Naive thymus-derived CD4-positive, alpha-beta T cell (primary cell): ENCODE measurements at regions of chr3 and their contacts with region 1.

Region 1: DNA sequence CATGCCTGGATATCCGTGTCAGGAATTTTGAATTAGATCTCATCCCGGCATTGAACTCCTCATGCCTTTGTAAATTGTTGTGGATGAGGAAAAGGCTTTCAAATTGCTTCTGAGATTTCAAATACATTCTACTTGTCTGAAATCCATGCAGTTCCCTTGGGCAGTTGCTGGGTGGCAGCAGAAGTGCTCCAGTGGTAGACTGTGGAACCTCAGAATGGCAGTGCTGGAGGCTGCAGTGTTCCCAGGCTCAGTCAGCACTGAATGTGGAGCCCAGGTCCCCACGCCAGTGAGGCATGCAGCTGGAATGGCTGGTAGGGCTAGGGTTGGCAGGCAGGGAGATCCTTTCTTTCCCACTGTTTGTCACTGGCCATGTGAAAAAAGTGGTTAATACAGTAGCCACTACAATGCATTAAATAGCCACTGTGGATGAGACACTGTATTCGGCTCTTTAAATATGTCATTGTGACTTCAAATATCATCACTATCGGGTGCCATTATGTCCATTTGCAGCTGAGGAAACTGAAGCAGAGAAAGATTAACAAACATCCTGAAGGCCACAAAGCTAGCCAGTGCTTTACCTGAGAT is 98.6 kb downstream of the TPRG1 start:
- DNase-seq: peak in 6 of 9 donors; percentile 18 to 47 (median 32)
- ATAC-seq: peak; percentile 53
- H3K4me3 ChIP-seq: no peak overlapping the region
- H3K4me3 Mint-ChIP-seq: no peak overlapping the region
- H3K27ac ChIP-seq: no peak overlapping the region
- H3K27ac Mint-ChIP-seq: peak overlapping the region in 1 of 9 donors; percentile 27
- H3K4me1 ChIP-seq: peaks cover 0 to 15% of the 10 kb centered on the region in 2 donors
- H3K4me1 Mint-ChIP-seq: peaks cover 5 to 34% (median 20%) of the 10 kb centered on the region in 7 donors
- H3K27me3 ChIP-seq: no peaks in the 10 kb centered on the region
- H3K27me3 Mint-ChIP-seq: no peaks in the 10 kb centered on the region

Region 2: DNA sequence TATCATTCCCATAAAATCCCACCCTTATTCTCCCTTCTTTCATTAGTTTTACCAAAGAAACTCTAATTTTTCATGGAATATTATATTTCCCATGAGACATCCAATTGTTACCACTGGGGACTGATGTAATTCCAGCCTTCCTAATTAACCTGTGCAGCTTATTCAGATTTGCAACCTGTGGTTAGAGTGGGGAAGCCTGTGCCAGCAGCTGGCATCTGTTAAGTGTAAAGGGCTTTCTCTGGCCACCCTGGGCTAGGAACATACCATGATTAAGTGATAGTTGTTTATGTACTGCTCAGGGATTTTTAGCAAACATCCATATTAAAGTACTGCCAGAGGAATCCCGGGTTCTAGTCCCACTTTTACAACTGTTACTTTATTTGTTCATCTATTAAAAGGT is 20.4 kb before region 1 on chr3:
- CTCF ChIA-PET with region 1: no interaction called
- POLR2A ChIA-PET with region 1: no interaction called
- intact Hi-C with region 1: no loop called
- DNase-seq: no peak
- ATAC-seq: no peak
- H3K4me3 ChIP-seq: no peak overlapping the region
- H3K4me3 Mint-ChIP-seq: no peak overlapping the region
- H3K27ac ChIP-seq: no peak overlapping the region
- H3K27ac Mint-ChIP-seq: peak overlapping the region in 1 of 9 donors; percentile 17
- H3K4me1 ChIP-seq: no peaks in the 10 kb centered on the region
- H3K4me1 Mint-ChIP-seq: peaks cover 0 to 1% (median 0%) of the 10 kb centered on the region in 7 donors
- H3K27me3 ChIP-seq: no peaks in the 10 kb centered on the region
- H3K27me3 Mint-ChIP-seq: peaks cover 0 to 18% (median 0%) of the 10 kb centered on the region in 5 donors

Region 3: DNA sequence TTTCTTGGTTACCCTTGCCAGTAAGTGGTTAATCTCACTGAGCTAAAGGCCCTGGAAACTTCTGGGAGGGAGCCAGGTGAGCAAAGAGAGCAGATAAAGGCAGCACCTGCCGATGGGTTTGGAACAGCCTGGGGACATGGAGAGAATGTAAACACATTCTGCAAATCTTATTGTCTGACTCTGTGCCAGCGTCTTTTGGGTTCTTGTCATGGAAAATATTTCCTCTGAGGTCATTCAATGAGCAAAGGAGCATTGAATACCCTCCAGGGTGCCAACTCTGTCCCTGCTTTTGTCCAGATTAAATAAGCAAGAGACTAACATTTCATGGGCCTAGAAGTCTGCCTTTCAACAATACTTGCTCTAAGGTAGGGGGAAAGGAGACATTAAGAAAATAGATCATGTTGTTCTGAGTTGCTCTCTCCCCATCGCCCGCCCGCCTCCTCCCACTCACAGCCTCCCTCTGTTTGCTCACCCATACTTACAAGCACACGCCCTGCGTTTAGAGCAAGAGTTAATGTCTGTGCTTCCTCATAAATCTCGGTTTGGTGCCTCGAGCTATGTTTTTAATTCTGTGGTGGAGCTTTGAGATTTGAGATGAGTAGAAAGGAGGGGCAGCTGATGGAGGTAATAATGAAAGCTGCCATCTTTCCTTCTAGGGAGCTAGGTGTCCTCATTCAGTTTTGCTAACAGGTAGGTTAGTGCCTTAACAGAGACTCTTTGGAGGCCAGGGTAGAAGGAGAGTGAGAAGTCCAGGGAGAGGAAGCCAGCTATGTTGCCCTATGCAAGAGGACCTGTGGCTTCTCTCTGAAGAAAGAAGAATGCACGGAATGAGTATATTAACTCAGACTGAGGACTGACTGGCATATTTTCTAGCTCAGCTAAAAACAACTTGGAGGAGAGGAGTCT is 34.4 kb after region 1 on chr3:
- CTCF ChIA-PET with region 1: interaction called, 7 read pairs
- POLR2A ChIA-PET with region 1: no interaction called
- intact Hi-C with region 1: loop called in 1 of 2 experiments (anchors 5 kb)
- DNase-seq: peak in 5 of 9 donors; percentile 16 to 42 (median 28)
- ATAC-seq: no peak
- H3K4me3 ChIP-seq: no peak overlapping the region
- H3K4me3 Mint-ChIP-seq: peak overlapping the region; percentile 27 to 77 (median 64)
- H3K27ac ChIP-seq: no peak overlapping the region
- H3K27ac Mint-ChIP-seq: peak overlapping the region; percentile 44 to 93 (median 86)
- H3K4me1 ChIP-seq: peaks cover 0 to 19% of the 10 kb centered on the region in 2 donors
- H3K4me1 Mint-ChIP-seq: peaks cover 15 to 68% (median 57%) of the 10 kb centered on the region in 7 donors
- H3K27me3 ChIP-seq: no peaks in the 10 kb centered on the region
- H3K27me3 Mint-ChIP-seq: no peaks in the 10 kb centered on the region

Region 4: DNA sequence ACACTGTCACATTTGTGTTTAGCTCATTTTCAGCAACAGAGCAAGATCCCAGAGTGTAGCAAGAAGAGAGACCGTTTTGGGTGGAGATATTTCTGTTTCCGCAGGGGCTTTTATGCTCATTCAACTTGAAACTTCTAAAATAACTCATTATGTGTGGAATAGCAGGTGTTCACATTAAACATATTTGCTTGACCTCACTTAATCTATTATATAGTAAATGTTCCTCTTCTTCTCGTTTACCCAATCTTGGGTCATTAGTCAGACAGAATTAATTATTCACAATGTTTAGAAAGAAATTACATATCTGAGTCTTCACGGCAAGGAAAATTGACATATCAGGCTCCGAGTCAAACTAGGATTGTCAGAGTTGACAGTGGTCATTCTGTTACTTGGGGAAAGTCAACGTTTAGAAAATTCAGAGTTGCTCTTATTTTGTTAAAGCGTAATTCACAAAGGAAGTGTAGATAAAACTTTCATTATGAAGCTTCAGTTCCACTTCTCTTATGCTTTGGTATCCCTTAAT is 124.3 kb after region 1 on chr3:
- CTCF ChIA-PET with region 1: interaction called, 3 read pairs
- POLR2A ChIA-PET with region 1: no interaction called
- intact Hi-C with region 1: loop called in 1 of 2 experiments (anchors 5 kb)
- DNase-seq: no peak
- ATAC-seq: no peak
- H3K4me3 ChIP-seq: no peak overlapping the region
- H3K4me3 Mint-ChIP-seq: peak overlapping the region in 1 of 10 donors; percentile 31
- H3K27ac ChIP-seq: no peak overlapping the region
- H3K27ac Mint-ChIP-seq: peak overlapping the region in 1 of 9 donors; percentile 62
- H3K4me1 ChIP-seq: no peaks in the 10 kb centered on the region
- H3K4me1 Mint-ChIP-seq: peaks cover 0 to 25% (median 0%) of the 10 kb centered on the region in 7 donors
- H3K27me3 ChIP-seq: no peaks in the 10 kb centered on the region
- H3K27me3 Mint-ChIP-seq: peaks cover 0 to 3% (median 0%) of the 10 kb centered on the region in 5 donors

Region 5: DNA sequence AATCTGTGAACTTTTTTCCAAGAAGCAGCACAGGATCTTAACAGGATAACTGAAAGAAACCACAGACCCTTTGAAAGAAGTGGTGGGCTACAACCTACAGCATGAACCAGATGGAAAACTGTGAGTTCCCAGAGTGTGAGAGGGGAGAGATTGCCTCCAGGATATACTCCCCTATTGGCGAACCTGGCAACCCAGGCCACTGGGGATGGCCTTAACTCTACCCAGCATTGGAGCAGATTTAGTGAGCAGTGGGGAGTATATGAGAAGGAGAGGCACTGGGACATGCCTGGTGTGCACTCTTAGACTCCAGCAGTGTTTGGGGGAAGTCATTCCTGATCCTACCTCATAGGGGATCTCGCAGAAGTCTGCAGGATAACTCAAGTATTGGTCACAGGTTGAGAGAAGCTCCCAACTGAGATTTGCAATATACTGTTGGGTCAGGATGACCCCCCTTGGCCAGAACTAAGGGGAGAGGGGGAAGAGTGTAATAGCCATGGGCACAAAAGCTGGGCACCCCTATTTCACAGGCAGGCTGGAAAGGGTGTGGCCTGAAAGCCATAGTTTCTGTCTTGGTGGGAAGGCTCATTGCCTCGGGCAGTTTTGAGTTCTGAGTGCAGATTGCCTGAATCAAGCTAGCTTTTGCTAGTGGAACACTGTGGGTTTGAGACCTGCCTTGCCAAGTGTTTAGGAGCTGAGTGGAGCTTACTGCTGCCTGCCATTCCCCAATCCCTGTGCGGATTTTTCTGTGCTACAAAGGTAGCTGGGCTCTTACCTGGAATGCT is 160.0 kb after region 1 on chr3:
- CTCF ChIA-PET with region 1: no interaction called
- POLR2A ChIA-PET with region 1: no interaction called
- intact Hi-C with region 1: no loop called
- DNase-seq: no peak
- ATAC-seq: no peak
- H3K4me3 ChIP-seq: no peak overlapping the region
- H3K4me3 Mint-ChIP-seq: no peak overlapping the region
- H3K27ac ChIP-seq: no peak overlapping the region
- H3K27ac Mint-ChIP-seq: no peak overlapping the region
- H3K4me1 ChIP-seq: no peaks in the 10 kb centered on the region
- H3K4me1 Mint-ChIP-seq: peaks cover 0 to 7% (median 1%) of the 10 kb centered on the region in 7 donors
- H3K27me3 ChIP-seq: no peaks in the 10 kb centered on the region
- H3K27me3 Mint-ChIP-seq: no peaks in the 10 kb centered on the region

Region 6: DNA sequence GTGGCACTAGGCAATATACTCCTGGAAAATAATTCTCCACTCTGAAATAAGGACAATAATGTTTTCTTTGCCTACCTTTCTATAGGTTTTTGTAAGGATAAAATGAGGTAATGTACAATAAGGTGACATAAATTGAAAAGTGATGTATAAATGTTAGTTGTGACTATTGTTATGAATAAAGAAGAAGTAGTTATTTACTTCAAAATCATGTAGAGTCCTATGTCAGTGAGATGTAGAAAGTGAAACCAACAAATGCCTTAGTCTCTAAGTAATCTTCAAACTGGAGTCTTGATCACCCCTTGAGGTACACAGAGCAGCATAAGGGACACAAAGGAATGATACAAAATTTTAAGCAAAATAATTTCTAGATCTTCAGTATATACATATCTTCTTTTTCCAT is 300.6 kb after region 1 on chr3:
- CTCF ChIA-PET with region 1: interaction called, 3 read pairs
- POLR2A ChIA-PET with region 1: no interaction called
- intact Hi-C with region 1: loop called in 1 of 2 experiments (anchors 5 kb)
- DNase-seq: peak in 1 of 9 donors; percentile 9
- ATAC-seq: no peak
- H3K4me3 ChIP-seq: no peak overlapping the region
- H3K4me3 Mint-ChIP-seq: peak overlapping the region in 8 of 10 donors; percentile 22 to 68 (median 57)
- H3K27ac ChIP-seq: no peak overlapping the region
- H3K27ac Mint-ChIP-seq: peak overlapping the region in 4 of 9 donors; percentile 19 to 59 (median 38)
- H3K4me1 ChIP-seq: no peaks in the 10 kb centered on the region
- H3K4me1 Mint-ChIP-seq: peaks cover 0 to 37% (median 13%) of the 10 kb centered on the region in 7 donors
- H3K27me3 ChIP-seq: no peaks in the 10 kb centered on the region
- H3K27me3 Mint-ChIP-seq: peaks cover 0 to 1% (median 0%) of the 10 kb centered on the region in 5 donors

Region 7: DNA sequence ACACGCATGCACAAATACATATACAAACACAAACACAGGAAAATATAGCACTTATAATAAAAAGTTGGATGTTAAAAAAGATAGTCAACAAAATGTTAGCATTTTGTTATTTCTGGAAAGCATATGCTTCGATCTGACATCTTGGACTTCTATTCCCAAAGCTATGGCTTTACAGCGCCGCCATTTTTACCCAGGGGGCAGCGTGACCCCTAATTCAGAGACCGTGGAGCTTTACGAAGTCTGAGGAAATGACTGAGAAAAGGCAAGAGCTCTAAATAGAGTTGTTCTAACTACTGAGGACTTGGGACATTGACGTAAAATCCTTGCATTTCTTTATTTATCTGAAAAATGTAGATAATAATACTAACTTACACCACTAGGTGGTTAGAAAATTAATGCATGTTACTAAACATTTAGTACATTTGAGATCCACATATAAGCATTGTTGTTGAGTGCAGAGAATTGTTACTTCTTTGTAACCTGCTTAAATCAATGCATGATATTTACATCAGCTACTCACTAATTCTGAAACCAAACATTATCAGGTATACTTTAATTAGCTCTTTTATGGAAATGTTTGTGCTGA is 516.2 kb after region 1 on chr3:
- CTCF ChIA-PET with region 1: no interaction called
- POLR2A ChIA-PET with region 1: no interaction called
- intact Hi-C with region 1: loop called in 1 of 2 experiments (anchors 5 kb)
- DNase-seq: no peak
- ATAC-seq: no peak
- H3K4me3 ChIP-seq: no peak overlapping the region
- H3K4me3 Mint-ChIP-seq: no peak overlapping the region
- H3K27ac ChIP-seq: no peak overlapping the region
- H3K27ac Mint-ChIP-seq: no peak overlapping the region
- H3K4me1 ChIP-seq: no peaks in the 10 kb centered on the region
- H3K4me1 Mint-ChIP-seq: peaks cover 4 to 15% (median 10%) of the 10 kb centered on the region in 7 donors
- H3K27me3 ChIP-seq: no peaks in the 10 kb centered on the region
- H3K27me3 Mint-ChIP-seq: peaks cover 0 to 4% (median 0%) of the 10 kb centered on the region in 5 donors

Region 8: DNA sequence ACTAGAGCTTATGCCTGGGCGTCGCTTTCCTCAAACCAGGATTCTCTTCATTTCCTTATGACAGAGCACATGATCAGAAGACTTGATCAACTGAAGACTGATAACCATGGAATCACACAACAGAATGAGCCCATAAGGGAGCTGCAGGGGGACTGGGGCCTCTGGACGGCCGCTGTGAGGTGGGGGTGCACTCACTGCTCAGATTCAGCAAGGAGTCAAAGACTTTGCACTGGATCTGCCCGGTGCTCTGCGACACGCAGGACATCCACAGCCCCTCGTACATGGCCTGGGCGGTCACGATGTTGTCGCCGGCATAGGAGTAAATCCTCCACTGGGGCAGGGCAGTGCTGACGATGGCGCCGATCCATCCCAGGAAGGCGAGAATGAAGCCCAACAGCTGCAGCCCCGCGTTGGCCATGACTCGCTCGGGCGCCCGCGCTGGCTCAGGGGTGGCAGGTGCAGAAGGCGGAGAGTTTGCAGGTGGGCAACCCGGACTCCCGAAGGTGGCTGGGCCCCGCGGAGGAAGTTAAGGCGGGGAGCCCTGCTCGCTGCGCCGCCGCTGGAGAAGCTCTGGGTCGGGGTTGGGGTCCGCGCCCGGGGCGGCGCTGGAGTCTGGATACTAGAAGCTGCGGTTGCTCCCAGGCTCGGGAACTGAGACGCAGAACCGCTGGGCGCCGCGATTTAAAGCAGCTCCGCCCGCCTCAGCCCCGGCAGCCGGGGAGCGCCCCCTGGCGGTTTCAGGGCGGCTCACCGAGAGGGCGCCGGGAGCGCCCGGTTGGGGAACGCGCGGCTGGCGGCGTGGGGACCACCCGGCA is 1051.7 kb after region 1 on chr3 and contains the start of gene CLDN1:
- CTCF ChIA-PET with region 1: interaction called, 3 read pairs
- POLR2A ChIA-PET with region 1: no interaction called
- intact Hi-C with region 1: loop called in 1 of 2 experiments (anchors 2 kb)
- DNase-seq: peak; percentile 47 to 86 (median 76)
- ATAC-seq: peak; percentile 92
- H3K4me3 ChIP-seq: peak within 1 kb of the TSS; percentile 52
- H3K4me3 Mint-ChIP-seq: peak within 1 kb of the TSS; percentile 66 to 85 (median 80)
- H3K27ac ChIP-seq: no peak within 1 kb of the TSS
- H3K27ac Mint-ChIP-seq: peak within 1 kb of the TSS in 6 of 9 donors; percentile 6 to 38 (median 22)
- H3K4me1 ChIP-seq: peaks cover 0 to 4% of the 10 kb centered on the region in 2 donors
- H3K4me1 Mint-ChIP-seq: peaks cover 14 to 30% (median 21%) of the 10 kb centered on the region in 7 donors
- H3K27me3 ChIP-seq: no peaks in the 10 kb centered on the region
- H3K27me3 Mint-ChIP-seq: peaks cover 30 to 47% (median 38%) of the 10 kb centered on the region in 5 donors
- total RNA-seq, gene CLDN1: 0.08 to 0.32 TPM in 2 of 5 experiments, not detected in the others